Aorta (tissue), 5 donors: ENCODE measurements at regions of chr6 and their contacts with region 1.

Region 1: DNA sequence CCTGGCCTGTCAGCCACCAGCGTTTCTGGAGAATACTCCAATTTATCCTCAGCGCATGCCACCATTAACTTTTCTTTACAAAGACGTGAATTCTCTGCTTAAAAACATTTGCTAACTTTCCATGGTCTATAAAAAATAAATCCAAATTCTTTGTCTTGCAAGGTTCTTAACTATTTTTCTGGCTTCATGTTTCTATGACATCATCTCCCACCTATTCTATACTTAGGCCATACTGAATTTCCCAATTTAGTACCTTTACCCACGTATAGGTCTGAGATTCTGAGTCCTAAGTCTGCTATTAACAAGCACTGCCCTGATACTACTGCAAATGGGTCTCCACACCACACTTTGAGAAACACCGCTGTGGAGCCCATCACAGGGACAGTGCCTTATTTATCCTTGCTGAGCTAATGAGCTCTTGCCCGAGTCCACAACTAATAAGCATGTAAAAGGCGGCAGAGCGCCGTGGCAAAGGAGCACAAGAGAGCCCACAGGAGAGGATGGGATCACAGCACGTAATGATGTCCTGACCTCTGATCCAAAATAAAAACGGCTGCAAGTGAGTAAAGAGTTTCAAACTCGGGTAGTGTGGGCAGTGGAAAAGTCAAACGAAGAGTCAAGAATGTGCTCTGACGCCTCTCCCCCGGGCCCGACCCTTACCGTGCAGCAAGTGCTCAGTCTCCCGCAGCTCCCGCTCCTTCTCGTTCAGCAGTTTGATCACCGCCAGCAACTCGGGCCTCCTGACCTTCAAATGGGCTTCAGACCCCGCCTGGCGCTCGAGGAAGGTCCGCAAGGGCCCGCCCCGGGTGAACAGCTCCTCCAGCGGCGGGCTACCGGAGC is 522 bp downstream of the MTRF1L start:
- DNase-seq: no peak
- ATAC-seq: peak; percentile 19
- H3K4me3 ChIP-seq: peak overlapping the region; percentile 98 to 100
- H3K27ac ChIP-seq: peak overlapping the region; percentile 57 to 92
- H3K4me1 ChIP-seq: peaks cover 3 to 6% of the 10 kb centered on the region in 2 donors
- H3K27me3 ChIP-seq: no peaks in the 10 kb centered on the region

Region 2: DNA sequence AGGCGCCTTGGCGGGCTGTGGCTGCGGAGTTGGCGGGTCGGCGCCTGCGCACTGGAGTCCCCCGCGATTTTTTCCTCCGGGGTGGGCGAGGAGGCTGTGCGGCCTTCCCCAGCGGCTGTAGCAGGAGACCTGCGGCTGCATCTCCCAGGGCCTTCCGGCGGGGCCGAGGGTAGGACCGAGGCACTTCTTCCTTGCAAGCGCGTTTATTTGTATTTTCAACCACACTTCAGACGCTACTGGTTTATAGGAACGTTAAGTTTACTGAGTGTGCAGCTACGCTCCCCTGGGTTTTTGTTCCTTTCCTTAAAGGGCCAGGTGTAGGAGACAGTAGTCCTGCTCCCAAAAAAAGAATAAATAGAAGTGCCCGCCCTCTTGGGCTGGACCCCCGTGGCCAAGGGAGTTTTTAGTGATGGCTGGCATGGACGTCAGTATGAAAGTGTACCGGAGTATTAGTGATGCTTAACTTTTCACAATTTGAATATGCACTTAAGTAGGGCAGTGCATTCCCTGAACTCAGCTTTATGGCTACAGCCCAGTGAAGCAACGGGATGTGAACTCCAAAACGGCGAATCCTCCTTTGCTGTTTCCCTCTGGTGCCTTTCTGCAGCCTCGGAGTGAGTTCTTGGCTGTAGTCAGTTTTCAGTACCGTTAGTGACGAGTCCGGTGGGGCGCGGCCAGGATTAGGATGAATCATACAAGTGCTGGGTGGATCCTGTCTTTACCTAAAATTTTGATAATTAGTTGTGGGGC is 18.2 kb before region 1 on chr6:
- intact Hi-C with region 1: loop called in 1 of 2 experiments (anchors 2 kb)
- DNase-seq: peak; percentile 98 to 99
- ATAC-seq: peak; percentile 74
- H3K4me3 ChIP-seq: peak overlapping the region; percentile 72 to 87
- H3K27ac ChIP-seq: peak overlapping the region; percentile 7 to 90
- H3K4me1 ChIP-seq: no peaks in the 10 kb centered on the region
- H3K27me3 ChIP-seq: no peaks in the 10 kb centered on the region

Region 3: DNA sequence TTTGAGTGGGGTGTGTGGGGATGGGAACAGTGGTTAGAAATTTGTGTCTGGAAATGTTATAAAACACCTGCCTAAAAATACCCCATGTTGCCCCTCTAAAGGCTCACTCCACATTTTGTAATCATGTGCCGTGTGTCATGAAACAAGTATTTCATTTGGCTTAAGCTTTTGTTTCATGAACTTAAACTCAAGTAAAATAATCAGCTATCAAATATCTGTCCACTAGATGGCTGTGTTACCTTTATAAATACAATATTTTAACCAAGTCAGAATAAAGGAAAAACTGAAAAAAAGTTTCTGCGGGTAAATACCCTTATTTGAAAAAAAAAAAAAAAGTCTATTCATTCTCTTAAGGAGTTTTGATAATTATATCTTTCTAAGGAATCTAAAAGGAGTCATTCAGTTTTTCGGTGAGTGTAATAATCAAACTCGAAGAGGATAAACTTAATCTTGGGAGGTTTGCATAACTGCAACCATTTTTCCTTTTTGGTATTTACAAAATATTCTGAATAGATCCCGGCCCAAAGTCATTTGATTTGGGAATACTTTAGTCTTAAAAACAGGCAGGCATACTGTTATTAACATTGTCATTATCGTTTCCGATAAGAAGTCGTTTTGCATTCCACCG is 30.4 kb after region 1 on chr6:
- intact Hi-C with region 1: no loop called
- DNase-seq: no peak
- ATAC-seq: peak; percentile 52
- H3K4me3 ChIP-seq: no peak overlapping the region
- H3K27ac ChIP-seq: no peak overlapping the region
- H3K4me1 ChIP-seq: no peaks in the 10 kb centered on the region
- H3K27me3 ChIP-seq: no peaks in the 10 kb centered on the region